WTC11 (cell line): ENCODE measurements at regions of chrX and their contacts with region 1.

Region 1: DNA sequence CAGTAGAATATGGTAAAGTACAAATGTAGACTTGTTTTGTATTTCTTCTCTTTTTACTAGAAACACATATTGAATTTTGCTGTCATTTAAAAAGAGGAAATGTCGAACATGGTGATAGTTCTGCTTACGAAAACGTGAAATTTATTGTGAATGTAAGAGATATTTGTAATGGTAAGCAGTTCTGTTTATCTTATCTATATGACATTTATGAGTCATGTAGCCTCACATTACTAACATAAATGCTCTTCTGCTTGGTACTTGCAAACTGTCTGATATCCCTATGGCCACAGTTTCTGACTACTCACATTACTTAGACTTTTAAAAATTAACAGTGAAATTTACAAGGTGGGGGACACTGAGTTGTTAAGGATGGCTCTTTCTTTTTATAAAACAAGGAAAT is 57.9 kb downstream of the PASD1 start:
- DNase-seq: no peak
- ATAC-seq: no peak
- H3K4me3 Mint-ChIP-seq: no peak overlapping the region
- H3K27ac Mint-ChIP-seq: no peak overlapping the region
- H3K4me1 Mint-ChIP-seq: no peaks in the 10 kb centered on the region
- H3K27me3 Mint-ChIP-seq: no peaks in the 10 kb centered on the region
- CTCF ChIP-seq: no peak

Region 2: DNA sequence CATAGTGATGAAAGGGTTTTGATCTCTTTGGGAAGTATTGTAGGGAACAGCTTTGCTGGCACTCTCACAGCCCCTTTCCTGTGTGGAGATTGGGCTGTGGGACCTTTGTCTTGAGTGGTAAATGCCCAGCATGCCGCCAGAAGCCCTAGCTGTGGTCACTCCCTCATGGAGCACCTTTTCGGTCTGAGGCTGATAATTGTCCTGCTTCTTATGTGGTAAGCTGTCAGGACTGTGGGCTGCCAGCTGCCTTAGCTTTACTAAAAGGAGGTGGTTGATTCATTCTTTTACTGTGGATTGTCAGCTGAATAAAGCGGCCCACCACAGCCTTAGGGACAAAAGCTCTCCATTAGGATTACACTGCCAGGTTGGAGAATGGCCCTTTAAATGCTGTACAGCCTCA is 50.9 kb before region 1 on chrX:
- CTCF ChIA-PET with region 1: no interaction called
- POLR2A ChIA-PET with region 1: interaction called, 10 read pairs
- DNase-seq: no peak
- ATAC-seq: no peak
- H3K4me3 Mint-ChIP-seq: no peak overlapping the region
- H3K27ac Mint-ChIP-seq: no peak overlapping the region
- H3K4me1 Mint-ChIP-seq: no peaks in the 10 kb centered on the region
- H3K27me3 Mint-ChIP-seq: no peaks in the 10 kb centered on the region
- CTCF ChIP-seq: no peak